Activated T-helper 1 cell treated with anti-CD3 and anti-CD28 coated beads, Interleukin-12 subunit alpha, Interleukin-12 subunit beta, Interleukin-2, Interleukin-4 antibody, amounts not matched to agents 30 ng/mL and 10 ng/mL and 1 ng/mL, durations not matched to agents 14 hours and 24 hours and 36 hours (primary cell): ENCODE measurements at regions of chr4 and their contacts with region 1.

Region 1: GRCh38 chr4:108345862-108346817 is 177.4 kb upstream of the LEF1 start:
- DNase-seq: no peak
- H3K4me3 Mint-ChIP-seq: peak overlapping the region; percentile 28
- H3K27ac Mint-ChIP-seq: no peak overlapping the region
- H3K4me1 Mint-ChIP-seq: peaks cover 44% of the 10 kb centered on the region
- H3K27me3 Mint-ChIP-seq: no peaks in the 10 kb centered on the region

Region 2: DNA sequence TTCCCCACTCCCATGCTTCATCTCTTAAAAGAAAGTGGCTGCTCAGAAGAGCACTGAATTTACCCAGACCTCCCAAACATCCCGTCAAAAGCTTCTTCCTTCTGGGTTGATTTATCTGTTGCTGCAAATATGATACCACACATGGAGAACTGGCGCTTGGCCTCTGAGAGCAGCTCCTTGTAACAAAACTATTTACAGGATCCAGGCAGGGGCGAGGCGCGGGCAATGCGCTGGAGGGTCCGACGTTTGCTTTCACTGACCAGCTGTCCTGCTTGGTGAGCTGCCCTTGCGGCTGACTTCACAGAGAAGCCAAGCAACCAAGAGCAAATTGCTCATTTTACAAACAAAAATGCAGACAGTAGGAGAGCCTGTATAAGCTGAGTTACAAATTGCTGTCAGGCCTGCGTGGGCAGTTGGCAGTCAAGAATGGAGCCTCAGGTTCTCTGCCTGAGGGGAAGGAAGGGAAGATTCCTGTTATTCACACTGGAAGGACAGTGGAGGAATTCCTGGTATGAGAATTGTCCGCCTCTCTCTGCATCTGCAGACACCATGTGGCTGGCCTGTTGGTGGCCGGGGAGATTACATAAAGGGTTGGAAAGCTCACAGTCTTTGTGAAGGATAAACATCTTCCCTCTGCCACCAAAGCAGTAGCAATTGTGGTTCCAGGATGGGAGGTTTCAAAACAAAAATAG is 14.8 kb after region 1 on chr4:
- intact Hi-C with region 1: loop called (anchors 2 kb)
- DNase-seq: no peak
- H3K4me3 Mint-ChIP-seq: peak overlapping the region; percentile 24
- H3K27ac Mint-ChIP-seq: peak overlapping the region; percentile 3
- H3K4me1 Mint-ChIP-seq: peaks cover 73% of the 10 kb centered on the region
- H3K27me3 Mint-ChIP-seq: peaks cover 2% of the 10 kb centered on the region